Left cardiac atrium (tissue), 4 donors: ENCODE measurements at regions of chr2 and their contacts with region 1.

Region 1: DNA sequence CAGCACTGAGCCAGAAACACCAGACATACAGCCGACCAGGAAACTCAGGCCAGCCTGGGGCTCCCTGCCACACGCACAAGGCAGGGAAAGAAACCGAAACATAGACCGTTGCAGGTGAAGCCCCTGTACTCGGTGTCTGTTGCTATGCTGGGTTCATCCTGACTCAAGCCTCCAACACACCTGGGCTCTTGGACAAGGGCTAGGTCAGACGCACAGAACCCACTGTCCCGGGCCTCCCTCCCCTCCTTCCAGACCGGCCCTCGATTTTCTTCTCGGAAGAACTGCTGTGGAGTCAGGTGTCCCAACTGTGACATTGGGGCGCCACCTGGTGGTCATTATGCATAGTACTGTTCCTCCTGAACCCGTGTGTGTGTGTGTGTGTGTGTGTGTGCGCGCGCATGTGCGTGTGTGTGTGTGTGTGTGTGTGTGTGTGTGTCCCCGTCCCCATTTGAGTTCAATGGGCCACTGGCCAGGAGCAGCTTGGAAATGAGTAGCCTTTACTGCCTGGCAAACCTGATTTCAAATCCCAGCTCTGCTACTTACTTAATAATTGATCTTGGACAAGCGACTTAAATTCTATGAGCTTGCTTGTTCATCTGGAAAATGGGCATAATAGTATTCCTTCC is 55.4 kb upstream of the GLI2 start:
- DNase-seq: peak; percentile 89
- ATAC-seq: peak; percentile 73 to 81

Region 2: GRCh38 chr2:120343433-120344105 is 336.7 kb before region 1 on chr2:
- intact Hi-C with region 1: loop called (anchors 1 to 5 kb)
- DNase-seq: peak; percentile 87
- ATAC-seq: peak; percentile 87 to 91

Region 3: GRCh38 chr2:120465989-120466703 is 214.1 kb before region 1 on chr2:
- intact Hi-C with region 1: loop called in 1 of 2 experiments (anchors 10 kb)
- DNase-seq: peak; percentile 52
- ATAC-seq: no peak